ENCODE measurements at regions of chr1 and their contacts with region 1.

Region 1: GRCh38 chr1:116485071-116485735 is 85.6 kb downstream of the CD58 start:
- DNase-seq: peak; percentile 95
- H3K4me3 ChIP-seq: no peak overlapping the region
- H3K27ac ChIP-seq: peak overlapping the region; percentile 78
- H3K4me1 ChIP-seq: peaks cover 44% of the 10 kb centered on the region
- H3K27me3 ChIP-seq: no peaks in the 10 kb centered on the region
- CTCF ChIP-seq: peak; percentile 96

Region 2: DNA sequence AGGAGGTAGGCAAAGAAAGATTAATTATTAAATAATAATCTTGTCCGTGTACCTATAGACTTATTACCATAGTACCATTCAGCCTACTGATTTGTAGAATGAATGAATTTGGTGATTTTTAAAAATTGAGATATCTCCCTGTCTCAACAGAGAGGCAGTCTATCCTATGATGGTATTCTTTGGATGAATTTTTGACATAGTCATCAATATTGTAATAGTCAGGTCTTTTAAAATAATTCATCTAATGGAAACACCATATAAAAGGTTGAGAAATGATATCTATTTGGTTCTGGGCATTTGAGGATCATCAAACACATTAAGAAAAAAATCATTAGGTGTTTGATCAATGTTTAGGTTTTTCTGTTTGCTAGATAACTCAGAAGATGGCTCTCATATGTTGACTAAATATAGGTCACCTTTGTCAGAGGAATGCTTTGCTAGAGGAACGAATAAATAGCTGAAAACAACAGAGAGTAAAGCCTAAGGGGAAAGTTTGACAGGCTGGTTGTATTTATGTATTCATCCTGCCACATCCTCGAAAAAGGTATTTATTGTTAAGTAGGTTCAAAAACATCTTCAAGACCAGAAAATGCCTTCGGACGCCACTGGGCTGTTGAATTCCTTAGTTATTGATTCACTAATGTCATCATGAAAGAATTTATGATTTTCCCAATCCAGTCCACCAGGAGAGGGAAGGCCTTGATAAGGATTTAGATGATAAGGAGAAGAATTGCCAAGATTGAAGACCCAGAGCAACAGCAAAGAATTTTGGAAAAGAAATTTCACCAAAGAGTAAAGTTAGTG is 409.4 kb before region 1 on chr1:
- CTCF ChIA-PET with region 1: no interaction called
- POLR2A ChIA-PET with region 1: no interaction called
- intact Hi-C with region 1: loop called (anchors 2 kb)
- DNase-seq: no peak
- H3K4me3 ChIP-seq: no peak overlapping the region
- H3K27ac ChIP-seq: no peak overlapping the region
- H3K4me1 ChIP-seq: peaks cover 18% of the 10 kb centered on the region
- H3K27me3 ChIP-seq: no peaks in the 10 kb centered on the region
- CTCF ChIP-seq: no peak

Region 3: DNA sequence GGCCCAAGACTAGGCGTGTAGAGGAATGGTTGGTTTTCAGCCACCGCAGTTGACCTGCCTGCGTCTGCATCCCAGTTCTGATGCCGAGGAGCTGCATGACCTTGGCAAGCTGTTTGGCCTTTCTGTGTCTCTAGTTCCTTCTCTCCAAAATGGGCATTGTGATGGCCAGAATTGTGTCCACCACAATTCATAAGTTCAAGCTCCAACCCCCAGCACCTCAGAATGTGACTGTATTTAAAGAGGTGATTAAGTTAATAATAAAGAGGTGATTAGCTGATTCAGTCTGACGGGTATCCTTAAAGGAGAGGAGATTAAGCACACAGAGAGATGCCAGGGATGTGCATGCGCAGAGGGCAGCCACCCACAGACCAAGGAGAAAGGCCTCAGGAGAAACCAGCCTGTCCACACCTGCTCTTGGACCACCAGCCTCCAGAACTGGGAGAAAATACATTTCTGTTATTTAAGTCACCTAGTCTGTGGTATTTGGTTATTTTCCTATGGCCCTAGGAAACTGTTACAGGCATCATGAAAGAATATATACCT is 345.5 kb before region 1 on chr1:
- CTCF ChIA-PET with region 1: interaction called, 112 read pairs
- POLR2A ChIA-PET with region 1: no interaction called
- intact Hi-C with region 1: loop called (anchors 1 kb)
- DNase-seq: no peak
- H3K4me3 ChIP-seq: no peak overlapping the region
- H3K27ac ChIP-seq: peak overlapping the region; percentile 54
- H3K4me1 ChIP-seq: peaks cover 8% of the 10 kb centered on the region
- H3K27me3 ChIP-seq: no peaks in the 10 kb centered on the region
- CTCF ChIP-seq: no peak

Region 4: GRCh38 chr1:116311756-116312691 is 173.2 kb before region 1 on chr1:
- CTCF ChIA-PET with region 1: no interaction called
- POLR2A ChIA-PET with region 1: no interaction called
- intact Hi-C with region 1: no loop called
- DNase-seq: no peak
- H3K4me3 ChIP-seq: no peak overlapping the region
- H3K27ac ChIP-seq: peak overlapping the region; percentile 8
- H3K4me1 ChIP-seq: peaks cover 4% of the 10 kb centered on the region
- H3K27me3 ChIP-seq: no peaks in the 10 kb centered on the region
- CTCF ChIP-seq: no peak

Region 5: GRCh38 chr1:116360429-116361173 is 124.6 kb before region 1 on chr1:
- CTCF ChIA-PET with region 1: interaction called, 3 read pairs
- POLR2A ChIA-PET with region 1: no interaction called
- intact Hi-C with region 1: loop called (anchors 1 kb)
- DNase-seq: peak; percentile 60
- H3K4me3 ChIP-seq: no peak overlapping the region
- H3K27ac ChIP-seq: peak overlapping the region; percentile 100
- H3K4me1 ChIP-seq: peaks cover 80% of the 10 kb centered on the region
- H3K27me3 ChIP-seq: no peaks in the 10 kb centered on the region
- CTCF ChIP-seq: peak; percentile 40; the same call in 1 of the 2 replicates

Region 6: DNA sequence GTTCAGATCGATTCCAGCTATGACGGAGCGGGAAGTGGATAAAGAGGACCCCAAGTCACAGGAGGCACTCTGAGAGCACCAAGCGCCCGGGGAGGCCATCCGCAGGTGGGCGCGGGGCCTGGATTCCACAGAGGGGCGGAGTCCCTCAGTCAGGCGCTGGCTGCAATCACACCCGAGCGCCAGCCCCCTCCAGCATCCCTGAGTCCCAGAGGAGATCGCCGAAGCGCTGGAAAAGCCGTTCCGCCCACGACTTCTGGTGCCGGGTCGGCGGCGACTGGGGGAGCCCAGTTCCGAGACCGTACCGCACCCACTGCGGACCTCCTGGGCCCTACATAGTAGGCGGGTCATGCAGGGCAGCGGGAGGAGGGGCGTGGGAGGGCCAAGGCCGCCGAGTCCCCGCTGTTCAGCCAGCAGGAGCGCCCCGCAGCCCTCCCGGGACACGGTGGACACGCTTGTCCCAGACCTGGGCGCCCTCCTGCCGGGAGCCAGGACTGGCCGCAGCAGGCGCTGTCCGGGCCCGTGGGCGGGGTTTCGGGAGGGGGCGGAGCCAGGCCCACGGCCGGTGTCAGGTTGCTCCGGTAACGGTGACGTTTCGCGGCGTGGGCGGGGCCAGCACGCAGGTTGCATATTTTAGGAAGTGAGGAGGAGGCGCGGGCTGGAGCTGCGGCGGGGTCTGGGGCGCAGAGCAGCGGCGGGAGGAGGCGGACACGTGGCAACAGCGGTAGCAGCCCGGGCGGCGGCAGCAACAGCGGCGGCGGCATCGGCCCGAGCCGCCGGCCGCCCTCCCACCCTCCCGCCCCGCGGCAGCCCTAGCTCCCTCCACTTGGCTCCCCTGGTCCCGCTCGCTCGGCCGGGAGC is 112.4 kb before region 1 on chr1 and contains the start of gene ATP1A1:
- CTCF ChIA-PET with region 1: interaction called, 7 read pairs
- POLR2A ChIA-PET with region 1: no interaction called
- intact Hi-C with region 1: loop called (anchors 5 kb)
- DNase-seq: peak; percentile 97
- H3K4me3 ChIP-seq: peak within 1 kb of the TSS; percentile 91
- H3K27ac ChIP-seq: peak within 1 kb of the TSS; percentile 97
- H3K4me1 ChIP-seq: peaks cover 48% of the 10 kb centered on the region
- H3K27me3 ChIP-seq: no peaks in the 10 kb centered on the region
- CTCF ChIP-seq: no peak; the same call in 1 of the 2 replicates
- total RNA-seq, gene ATP1A1: 1,293 and 1,420 TPM in 2 replicates

Region 7: DNA sequence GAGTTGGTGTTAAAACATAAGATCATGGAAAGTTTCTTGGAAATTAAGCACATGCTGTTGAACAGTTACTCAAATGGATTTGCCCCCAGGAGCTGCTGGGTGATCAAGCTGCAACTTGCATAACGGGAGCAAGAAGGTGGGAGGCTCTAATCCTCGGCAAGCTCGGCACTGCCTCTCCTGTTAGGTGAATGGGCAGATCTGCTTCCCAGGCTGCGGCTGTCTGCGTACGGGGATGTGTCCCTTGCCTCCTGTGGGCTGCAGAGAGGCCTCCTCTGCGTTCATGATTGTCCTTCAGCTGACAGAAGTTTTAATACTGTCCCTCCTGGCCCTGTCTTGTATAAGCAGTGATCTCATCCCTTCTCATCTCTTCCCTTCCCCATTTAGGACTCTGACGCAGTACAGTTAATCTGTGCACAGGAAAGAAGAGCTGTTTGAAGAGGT is 75.4 kb before region 1 on chr1:
- CTCF ChIA-PET with region 1: interaction called, 4 read pairs
- POLR2A ChIA-PET with region 1: no interaction called
- intact Hi-C with region 1: loop called (anchors 1 kb)
- DNase-seq: no peak
- H3K4me3 ChIP-seq: no peak overlapping the region
- H3K27ac ChIP-seq: peak overlapping the region; percentile 52
- H3K4me1 ChIP-seq: peaks cover 24% of the 10 kb centered on the region
- H3K27me3 ChIP-seq: no peaks in the 10 kb centered on the region
- CTCF ChIP-seq: no peak

Region 8: DNA sequence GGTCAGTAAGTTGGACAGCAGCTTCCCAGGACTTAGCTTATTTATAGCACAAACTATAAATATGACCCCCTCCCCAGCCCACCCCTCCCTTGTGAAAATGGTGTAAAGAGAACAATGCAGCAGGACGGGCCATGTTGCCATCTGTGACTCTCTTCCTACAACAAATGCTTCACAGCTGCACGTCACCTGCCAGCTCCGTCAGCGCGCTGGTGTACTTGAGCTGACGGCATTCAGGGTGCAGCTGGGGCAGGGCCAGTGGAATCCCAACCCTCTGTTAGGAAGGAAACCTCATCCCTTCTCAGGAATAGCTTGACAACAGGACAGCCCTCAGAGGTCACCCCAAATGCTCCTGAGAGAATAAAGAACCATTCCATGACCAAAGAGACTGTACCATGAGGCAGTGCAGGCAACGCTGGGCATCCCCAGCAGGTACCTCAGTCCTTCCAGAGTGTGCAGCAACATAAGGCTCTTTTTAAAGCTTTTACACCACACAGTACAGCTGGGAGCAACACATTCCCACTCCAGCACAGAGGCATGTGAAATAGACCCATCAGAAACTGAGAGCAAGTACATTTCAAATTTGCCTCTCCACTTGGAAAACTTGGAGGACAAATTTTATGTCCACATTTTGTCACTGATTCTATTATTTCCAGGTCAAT is 27.1 kb before region 1 on chr1:
- CTCF ChIA-PET with region 1: no interaction called
- POLR2A ChIA-PET with region 1: no interaction called
- intact Hi-C with region 1: no loop called
- DNase-seq: no peak
- H3K4me3 ChIP-seq: no peak overlapping the region
- H3K27ac ChIP-seq: no peak overlapping the region
- H3K4me1 ChIP-seq: peaks cover 6% of the 10 kb centered on the region
- H3K27me3 ChIP-seq: no peaks in the 10 kb centered on the region
- CTCF ChIP-seq: no peak

Region 9: GRCh38 chr1:116498789-116499628 is 13.8 kb after region 1 on chr1:
- CTCF ChIA-PET with region 1: interaction called, 24 read pairs
- POLR2A ChIA-PET with region 1: no interaction called
- intact Hi-C with region 1: no loop called
- DNase-seq: peak; percentile 91
- H3K4me3 ChIP-seq: no peak overlapping the region
- H3K27ac ChIP-seq: peak overlapping the region; percentile 75
- H3K4me1 ChIP-seq: peaks cover 38% of the 10 kb centered on the region
- H3K27me3 ChIP-seq: no peaks in the 10 kb centered on the region
- CTCF ChIP-seq: peak; percentile 89